ENCODE measurements at regions of chr2 and their contacts with region 1.

Region 1: GRCh38 chr2:60998628-60999545 is 18.6 kb upstream of the PEX13 start:
- DNase-seq: no peak
- ATAC-seq: peak; percentile 92
- H3K4me3 ChIP-seq: no peak overlapping the region
- H3K27ac ChIP-seq: no peak overlapping the region
- H3K4me1 ChIP-seq: no peaks in the 10 kb centered on the region; the same call in 1 of the 2 replicates
- H3K27me3 ChIP-seq: no peaks in the 10 kb centered on the region
- CTCF ChIP-seq: peak; percentile 48 to 66 (median 59); a peak in 5 of 6 replicates
- EP300 ChIP-seq: no peak
- POLR2A ChIP-seq: no peak
- RAD21 ChIP-seq: peak; percentile 89

Region 2: GRCh38 chr2:60366135-60366712 is 632.7 kb before region 1 on chr2:
- CTCF ChIA-PET with region 1: no interaction called
- POLR2A ChIA-PET with region 1: no interaction called
- RAD21 ChIA-PET with region 1: no interaction called
- SMC1A ChIA-PET with region 1: no interaction called
- in situ Hi-C with region 1: no loop called
- intact Hi-C with region 1: no loop called
- DNase-seq: no peak
- ATAC-seq: peak; percentile 85
- H3K4me3 ChIP-seq: no peak overlapping the region
- H3K27ac ChIP-seq: peak overlapping the region; percentile 40
- H3K4me1 ChIP-seq: peaks cover 58% of the 10 kb centered on the region
- H3K27me3 ChIP-seq: no peaks in the 10 kb centered on the region
- CTCF ChIP-seq: no peak
- EP300 ChIP-seq: no peak
- POLR2A ChIP-seq: no peak
- RAD21 ChIP-seq: no peak

Region 3: DNA sequence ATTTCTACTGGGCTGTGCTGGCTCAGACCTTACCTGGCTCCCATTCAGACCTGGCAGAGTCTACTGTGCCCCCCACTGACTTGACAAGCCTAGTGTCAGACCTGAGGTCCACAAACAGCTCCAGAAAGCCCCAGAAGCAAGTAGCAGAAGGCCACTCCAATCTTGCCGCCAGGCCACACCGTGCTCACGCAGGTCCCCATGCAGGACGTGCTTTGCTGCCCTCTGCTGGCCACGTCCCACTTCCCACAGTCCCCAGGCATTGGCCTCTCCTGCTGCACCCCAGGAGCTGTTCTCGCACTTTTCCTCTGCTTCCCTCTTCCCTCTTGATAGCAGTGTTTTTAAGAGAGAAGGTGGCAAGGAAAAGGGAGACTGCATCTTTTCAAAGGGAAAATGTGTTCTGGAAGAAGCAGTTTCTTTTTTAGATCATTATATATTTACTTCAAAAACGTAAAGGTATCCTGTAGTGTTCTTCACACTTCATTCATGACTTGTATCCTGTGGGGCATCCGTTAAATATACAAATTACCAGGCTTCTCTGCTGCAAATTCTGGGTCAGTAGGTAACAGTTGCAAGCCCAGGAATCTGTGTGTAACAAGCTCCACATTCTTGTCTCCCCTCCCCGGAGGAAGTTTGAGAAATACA is 324.2 kb before region 1 on chr2:
- CTCF ChIA-PET with region 1: interaction called, 10 read pairs
- POLR2A ChIA-PET with region 1: no interaction called
- RAD21 ChIA-PET with region 1: interaction called, 3 read pairs
- SMC1A ChIA-PET with region 1: interaction called, 7 read pairs
- in situ Hi-C with region 1: no loop called
- intact Hi-C with region 1: no loop called
- DNase-seq: peak; percentile 19
- ATAC-seq: peak; percentile 100
- H3K4me3 ChIP-seq: no peak overlapping the region
- H3K27ac ChIP-seq: no peak overlapping the region
- H3K4me1 ChIP-seq: peaks cover 3% of the 10 kb centered on the region; the same call in 1 of the 2 replicates
- H3K27me3 ChIP-seq: no peaks in the 10 kb centered on the region
- CTCF ChIP-seq: peak; percentile 95 to 98 (median 98)
- EP300 ChIP-seq: no peak
- POLR2A ChIP-seq: no peak
- RAD21 ChIP-seq: peak; percentile 69

Region 4: GRCh38 chr2:60756191-60757041 is 242.5 kb before region 1 on chr2 and contains the start of gene PAPOLG:
- CTCF ChIA-PET with region 1: interaction called, 15 read pairs
- POLR2A ChIA-PET with region 1: no interaction called
- RAD21 ChIA-PET with region 1: interaction called, 4 read pairs
- SMC1A ChIA-PET with region 1: interaction called, 3 read pairs
- in situ Hi-C with region 1: no loop called
- intact Hi-C with region 1: no loop called
- DNase-seq: peak; percentile 61
- ATAC-seq: peak; percentile 98
- H3K4me3 ChIP-seq: peak within 1 kb of the TSS; percentile 96
- H3K27ac ChIP-seq: peak within 1 kb of the TSS; percentile 77
- H3K4me1 ChIP-seq: no peaks in the 10 kb centered on the region
- H3K27me3 ChIP-seq: no peaks in the 10 kb centered on the region
- CTCF ChIP-seq: no peak
- EP300 ChIP-seq: no peak
- POLR2A ChIP-seq: peak; percentile 84
- RAD21 ChIP-seq: no peak
- polyA plus RNA-seq, gene PAPOLG: 4.2 TPM

Region 5: GRCh38 chr2:60818272-60818671 is 180.6 kb before region 1 on chr2:
- CTCF ChIA-PET with region 1: interaction called, 95 read pairs
- POLR2A ChIA-PET with region 1: interaction called, 6 read pairs
- RAD21 ChIA-PET with region 1: interaction called, 31 read pairs
- SMC1A ChIA-PET with region 1: interaction called, 69 read pairs
- in situ Hi-C with region 1: no loop called
- intact Hi-C with region 1: no loop called
- DNase-seq: no peak
- ATAC-seq: peak; percentile 52
- H3K4me3 ChIP-seq: no peak overlapping the region
- H3K27ac ChIP-seq: no peak overlapping the region
- H3K4me1 ChIP-seq: no peaks in the 10 kb centered on the region; the same call in 1 of the 2 replicates
- H3K27me3 ChIP-seq: no peaks in the 10 kb centered on the region
- CTCF ChIP-seq: peak in 2 of 3 experiments; percentile 35 to 37; a peak in 4 of 6 replicates
- EP300 ChIP-seq: no peak
- POLR2A ChIP-seq: no peak
- RAD21 ChIP-seq: peak; percentile 55

Region 6: DNA sequence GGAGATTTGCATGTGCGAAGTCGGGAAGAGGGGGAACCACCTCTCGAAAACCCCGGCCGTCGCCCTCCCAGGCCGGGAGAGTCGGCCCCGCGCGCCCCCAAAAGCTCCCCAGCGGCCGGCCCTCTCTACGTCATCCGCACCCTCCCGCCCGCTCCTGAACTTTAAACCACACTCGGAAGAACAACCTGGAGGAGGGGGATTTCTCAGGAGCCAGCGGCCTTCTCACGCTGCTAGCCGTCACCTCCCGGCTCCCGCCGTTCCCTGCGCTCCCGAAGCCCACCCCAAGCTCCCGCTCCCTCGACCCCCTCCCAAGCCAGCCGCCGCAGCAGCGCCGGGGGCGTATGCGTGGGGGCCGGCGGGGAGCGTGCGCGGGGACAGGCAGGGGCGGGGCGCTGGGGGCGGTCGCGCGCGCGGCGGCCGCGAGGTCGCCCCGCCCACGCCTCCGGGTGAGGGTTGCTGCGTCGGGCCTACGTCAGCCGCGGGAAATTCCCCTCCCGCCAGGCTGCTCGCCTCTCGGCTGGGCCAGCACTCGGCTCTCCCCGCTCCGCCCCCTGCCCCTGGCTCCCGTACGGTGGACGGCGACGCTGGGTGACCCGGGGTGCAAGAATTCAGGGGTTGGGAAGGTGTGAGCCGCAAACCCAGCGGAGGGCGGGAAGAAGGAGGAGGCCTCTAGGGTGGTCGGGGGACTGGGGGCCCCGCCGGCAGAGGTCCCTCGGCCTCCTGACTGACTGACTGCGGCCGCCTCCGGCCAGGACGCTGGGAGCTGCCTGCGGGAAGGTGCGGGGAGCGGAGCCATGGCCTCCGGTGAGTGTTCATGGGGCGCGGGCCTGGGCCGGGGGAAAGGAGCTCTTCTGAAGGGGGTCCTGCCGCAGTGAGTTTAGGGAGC is 117.6 kb before region 1 on chr2 and contains the start of gene REL:
- CTCF ChIA-PET with region 1: interaction called, 23 read pairs
- POLR2A ChIA-PET with region 1: interaction called, 4 read pairs
- RAD21 ChIA-PET with region 1: interaction called, 39 read pairs
- SMC1A ChIA-PET with region 1: interaction called, 14 read pairs
- in situ Hi-C with region 1: no loop called
- intact Hi-C with region 1: no loop called
- DNase-seq: peak; percentile 59
- ATAC-seq: peak; percentile 77
- H3K4me3 ChIP-seq: peak within 1 kb of the TSS; percentile 78
- H3K27ac ChIP-seq: peak within 1 kb of the TSS; percentile 93
- H3K4me1 ChIP-seq: peaks cover 11% of the 10 kb centered on the region
- H3K27me3 ChIP-seq: no peaks in the 10 kb centered on the region
- CTCF ChIP-seq: no peak
- EP300 ChIP-seq: peak in 1 of 2 experiments; percentile 72; a peak in 2 of 4 replicates
- POLR2A ChIP-seq: peak; percentile 96
- RAD21 ChIP-seq: no peak
- polyA plus RNA-seq, gene REL: 6.3 to 17.7 TPM

Region 7: DNA sequence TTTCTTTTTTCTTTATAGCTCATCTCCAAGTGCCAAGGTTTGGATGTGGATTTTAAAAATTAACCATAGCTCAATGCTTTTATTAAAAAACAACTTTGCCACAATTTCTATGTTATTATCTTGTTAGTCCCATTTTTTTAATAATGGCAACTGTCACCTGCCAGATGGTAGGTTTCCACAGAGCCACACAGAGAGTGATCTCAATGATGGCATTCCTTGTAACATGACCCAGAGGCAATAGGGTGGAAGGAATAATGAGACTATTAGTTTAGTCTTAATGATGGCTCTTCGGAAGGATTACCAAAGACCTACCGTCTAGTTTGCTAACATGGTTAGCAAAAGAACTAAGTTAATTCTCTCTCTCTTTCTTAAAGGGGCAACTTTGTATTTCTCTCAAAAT is 53.5 kb before region 1 on chr2:
- CTCF ChIA-PET with region 1: interaction called, 12 read pairs
- POLR2A ChIA-PET with region 1: no interaction called
- RAD21 ChIA-PET with region 1: interaction called, 7 read pairs
- SMC1A ChIA-PET with region 1: interaction called, 14 read pairs
- in situ Hi-C with region 1: no loop called
- intact Hi-C with region 1: no loop called
- DNase-seq: no peak
- ATAC-seq: no peak
- H3K4me3 ChIP-seq: no peak overlapping the region
- H3K27ac ChIP-seq: no peak overlapping the region
- H3K4me1 ChIP-seq: no peaks in the 10 kb centered on the region
- H3K27me3 ChIP-seq: no peaks in the 10 kb centered on the region
- CTCF ChIP-seq: no peak
- EP300 ChIP-seq: no peak
- POLR2A ChIP-seq: no peak
- RAD21 ChIP-seq: no peak

Region 8: DNA sequence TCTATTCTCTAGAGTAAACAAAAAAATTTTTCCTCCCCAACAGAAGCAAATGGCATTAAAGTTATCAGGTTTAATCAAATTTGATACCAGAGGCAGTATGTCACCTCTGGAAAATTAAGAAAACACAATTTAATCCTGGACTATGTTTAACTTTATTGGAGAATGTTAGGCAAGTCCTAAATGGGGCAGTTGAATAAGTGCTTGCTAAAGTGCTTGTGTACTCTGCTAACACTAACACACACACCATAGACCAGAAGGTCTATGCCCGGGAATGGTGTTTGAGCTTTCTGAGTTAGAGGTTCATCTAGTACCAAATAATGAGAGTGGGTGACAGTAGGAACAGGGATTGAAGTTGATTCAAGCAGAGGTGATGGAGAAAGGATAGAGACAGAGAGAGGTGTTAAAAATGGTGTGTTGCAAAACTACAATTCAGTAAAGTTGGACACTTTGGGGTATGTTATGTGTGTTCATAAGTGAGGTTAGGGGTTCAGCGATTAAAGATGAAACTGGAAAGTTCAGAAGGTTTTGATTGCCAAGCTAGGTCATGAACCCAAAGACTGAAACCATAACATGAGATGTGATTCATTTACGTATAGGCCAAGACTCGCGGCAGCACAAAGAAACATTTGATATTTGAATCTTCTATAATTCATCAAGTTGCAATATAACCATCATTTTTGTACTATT is 21.9 kb before region 1 on chr2:
- CTCF ChIA-PET with region 1: interaction called, 5 read pairs
- POLR2A ChIA-PET with region 1: no interaction called
- RAD21 ChIA-PET with region 1: interaction called, 12 read pairs
- SMC1A ChIA-PET with region 1: interaction called, 15 read pairs
- in situ Hi-C with region 1: no loop called
- intact Hi-C with region 1: no loop called
- DNase-seq: no peak
- ATAC-seq: peak; percentile 66
- H3K4me3 ChIP-seq: no peak overlapping the region; the same call in 1 of the 2 replicates
- H3K27ac ChIP-seq: no peak overlapping the region
- H3K4me1 ChIP-seq: peaks cover 56% of the 10 kb centered on the region
- H3K27me3 ChIP-seq: no peaks in the 10 kb centered on the region
- CTCF ChIP-seq: no peak
- EP300 ChIP-seq: 0 out of 4 replicates have a peak, but pooled peaks of 1 of the 2 experiments have one; percentile 6
- POLR2A ChIP-seq: no peak
- RAD21 ChIP-seq: no peak

Region 9: DNA sequence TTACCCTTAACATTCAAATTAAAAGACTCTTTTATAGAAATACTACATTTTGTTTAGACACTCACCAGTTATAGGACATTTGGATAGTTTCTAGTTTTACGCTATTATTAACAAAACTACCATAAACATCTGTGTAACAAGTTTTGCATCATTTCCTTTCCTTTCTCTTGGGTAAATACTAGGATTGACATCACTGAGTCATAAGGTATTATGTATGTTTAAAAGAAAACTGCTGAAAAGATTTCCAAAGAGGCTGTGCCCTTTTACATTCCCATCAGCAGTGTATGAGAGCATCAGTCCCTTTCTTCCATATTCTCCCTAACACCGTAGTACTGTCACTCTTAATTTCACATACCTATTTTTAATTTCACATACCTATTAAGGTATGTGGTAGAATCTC is 341.4 kb after region 1 on chr2:
- CTCF ChIA-PET with region 1: no interaction called
- POLR2A ChIA-PET with region 1: no interaction called
- RAD21 ChIA-PET with region 1: no interaction called
- SMC1A ChIA-PET with region 1: no interaction called
- in situ Hi-C with region 1: no loop called
- intact Hi-C with region 1: no loop called
- DNase-seq: no peak
- ATAC-seq: no peak
- H3K4me3 ChIP-seq: no peak overlapping the region
- H3K27ac ChIP-seq: no peak overlapping the region
- H3K4me1 ChIP-seq: no peaks in the 10 kb centered on the region
- H3K27me3 ChIP-seq: no peaks in the 10 kb centered on the region
- CTCF ChIP-seq: no peak
- EP300 ChIP-seq: no peak
- POLR2A ChIP-seq: no peak
- RAD21 ChIP-seq: no peak